Mammary epithelial cell (primary cell): ENCODE measurements at regions of chr5 and their contacts with region 1.

Region 1: GRCh38 chr5:72692231-72692637 is 124.2 kb upstream of the TNPO1 start:
- DNase-seq: no peak
- H3K4me3 ChIP-seq: no peak overlapping the region
- H3K27ac ChIP-seq: no peak overlapping the region
- H3K4me1 ChIP-seq: no peaks in the 10 kb centered on the region
- H3K27me3 ChIP-seq: peaks cover 4% of the 10 kb centered on the region
- CTCF ChIP-seq: no peak

Region 2: DNA sequence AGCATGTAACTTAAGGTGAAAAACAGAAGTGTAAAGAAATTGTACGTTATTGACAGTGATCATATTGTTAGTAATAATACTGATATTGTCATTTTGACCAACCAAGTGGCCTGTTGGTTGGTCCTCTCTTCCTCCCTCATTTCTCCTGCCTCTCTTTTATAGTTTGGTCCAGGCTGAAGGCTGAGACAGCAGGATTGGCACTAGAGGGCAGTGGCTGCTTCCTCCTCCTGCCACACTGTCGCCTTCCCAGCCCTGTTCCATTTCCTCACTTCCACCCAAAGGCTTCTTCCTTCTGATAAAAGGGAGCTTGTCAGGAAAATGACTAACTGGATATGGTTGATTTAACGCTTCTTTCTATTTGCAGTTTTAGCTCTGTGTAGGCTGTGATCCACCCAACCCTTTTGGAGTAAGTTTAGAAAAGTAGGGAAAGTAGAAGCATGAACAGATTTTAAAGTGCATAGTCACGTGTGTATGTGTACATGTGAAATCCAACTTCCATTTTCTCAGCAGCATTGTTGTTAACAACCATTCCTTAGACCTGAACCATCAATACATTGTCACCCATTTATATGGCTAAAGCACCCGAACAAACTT is 336.4 kb before region 1 on chr5:
- CTCF ChIA-PET with region 1: interaction called, 14 read pairs
- dilution Hi-C with region 1: no loop called
- in situ Hi-C with region 1: no loop called
- intact Hi-C with region 1: no loop called
- DNase-seq: peak; percentile 21
- H3K4me3 ChIP-seq: no peak overlapping the region
- H3K27ac ChIP-seq: no peak overlapping the region
- H3K4me1 ChIP-seq: no peaks in the 10 kb centered on the region
- H3K27me3 ChIP-seq: no peaks in the 10 kb centered on the region
- CTCF ChIP-seq: peak; percentile 43 to 76

Region 3: DNA sequence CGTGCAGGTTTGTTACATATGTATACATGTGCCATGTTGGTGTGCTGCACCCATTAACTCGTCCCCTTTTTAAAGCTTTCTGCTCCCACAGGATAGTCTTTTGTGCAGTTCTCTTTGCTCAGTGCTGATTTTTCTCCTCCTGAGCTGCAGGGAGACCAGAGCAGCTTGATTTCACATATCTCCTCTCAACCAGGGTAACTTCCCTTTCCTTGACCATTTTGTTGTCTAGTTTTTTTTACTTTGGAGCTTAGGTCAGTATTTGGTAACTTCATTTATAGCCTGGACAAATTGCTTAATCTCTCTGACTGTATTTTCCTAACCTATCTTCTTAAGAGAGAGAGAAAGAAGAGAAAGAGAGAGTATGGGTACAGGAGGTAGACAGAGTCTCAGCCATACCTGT is 47.9 kb before region 1 on chr5:
- CTCF ChIA-PET with region 1: no interaction called
- dilution Hi-C with region 1: loop called (anchors 5 kb)
- in situ Hi-C with region 1: no loop called
- intact Hi-C with region 1: no loop called
- DNase-seq: no peak
- H3K4me3 ChIP-seq: no peak overlapping the region
- H3K27ac ChIP-seq: no peak overlapping the region
- H3K4me1 ChIP-seq: no peaks in the 10 kb centered on the region
- H3K27me3 ChIP-seq: no peaks in the 10 kb centered on the region
- CTCF ChIP-seq: no peak

Region 4: GRCh38 chr5:72723581-72723980 is 31.3 kb after region 1 on chr5:
- CTCF ChIA-PET with region 1: no interaction called
- dilution Hi-C with region 1: loop called (anchors 5 kb)
- in situ Hi-C with region 1: no loop called
- intact Hi-C with region 1: no loop called
- DNase-seq: peak; percentile 26
- H3K4me3 ChIP-seq: no peak overlapping the region
- H3K27ac ChIP-seq: no peak overlapping the region
- H3K4me1 ChIP-seq: no peaks in the 10 kb centered on the region
- H3K27me3 ChIP-seq: no peaks in the 10 kb centered on the region
- CTCF ChIP-seq: no peak